Naive thymus-derived CD4-positive, alpha-beta T cell (primary cell): ENCODE measurements at regions of chr19 and their contacts with region 1.

Region 1: DNA sequence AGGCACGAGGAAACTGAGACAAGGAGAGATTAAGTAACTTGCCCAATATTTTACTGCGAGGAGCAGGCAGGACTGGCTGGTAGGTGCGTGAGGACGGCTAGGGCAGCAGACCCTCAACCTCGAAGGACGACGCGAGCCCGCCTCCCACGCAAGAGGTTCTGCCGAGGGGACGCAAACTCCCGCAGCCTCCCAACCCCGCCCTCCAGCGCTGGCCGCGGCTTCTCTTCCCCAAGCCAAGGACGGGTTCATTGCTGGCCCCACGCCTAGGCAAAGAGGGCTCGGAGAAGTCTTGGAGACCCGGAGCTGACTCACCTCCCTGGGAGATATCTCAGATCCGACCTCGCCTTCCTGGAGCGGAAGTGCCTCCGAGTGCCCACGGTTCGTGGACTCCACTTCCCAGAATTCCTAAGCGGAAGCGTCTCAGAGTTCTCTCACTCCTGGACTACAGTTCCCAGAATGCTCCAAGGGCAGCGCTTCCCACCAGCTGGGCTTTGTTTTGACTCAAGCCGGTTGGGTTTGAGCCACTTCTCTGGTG is at the start of gene ZNF235:
- DNase-seq: peak; percentile 17 to 77 (median 59)
- ATAC-seq: peak; percentile 97
- H3K4me3 ChIP-seq: peak within 1 kb of the TSS; percentile 84
- H3K4me3 Mint-ChIP-seq: peak within 1 kb of the TSS; percentile 88 to 96 (median 93)
- H3K27ac ChIP-seq: peak within 1 kb of the TSS; percentile 65
- H3K27ac Mint-ChIP-seq: peak within 1 kb of the TSS; percentile 20 to 82 (median 77)
- H3K4me1 ChIP-seq: peaks cover 10 to 12% of the 10 kb centered on the region in 2 donors
- H3K4me1 Mint-ChIP-seq: peaks cover 5 to 34% (median 27%) of the 10 kb centered on the region in 7 donors
- H3K27me3 ChIP-seq: no peaks in the 10 kb centered on the region
- H3K27me3 Mint-ChIP-seq: peaks cover 0 to 10% (median 0%) of the 10 kb centered on the region in 5 donors
- total RNA-seq, gene ZNF235: 5.5 to 14.3 (median 6.7) TPM

Region 2: DNA sequence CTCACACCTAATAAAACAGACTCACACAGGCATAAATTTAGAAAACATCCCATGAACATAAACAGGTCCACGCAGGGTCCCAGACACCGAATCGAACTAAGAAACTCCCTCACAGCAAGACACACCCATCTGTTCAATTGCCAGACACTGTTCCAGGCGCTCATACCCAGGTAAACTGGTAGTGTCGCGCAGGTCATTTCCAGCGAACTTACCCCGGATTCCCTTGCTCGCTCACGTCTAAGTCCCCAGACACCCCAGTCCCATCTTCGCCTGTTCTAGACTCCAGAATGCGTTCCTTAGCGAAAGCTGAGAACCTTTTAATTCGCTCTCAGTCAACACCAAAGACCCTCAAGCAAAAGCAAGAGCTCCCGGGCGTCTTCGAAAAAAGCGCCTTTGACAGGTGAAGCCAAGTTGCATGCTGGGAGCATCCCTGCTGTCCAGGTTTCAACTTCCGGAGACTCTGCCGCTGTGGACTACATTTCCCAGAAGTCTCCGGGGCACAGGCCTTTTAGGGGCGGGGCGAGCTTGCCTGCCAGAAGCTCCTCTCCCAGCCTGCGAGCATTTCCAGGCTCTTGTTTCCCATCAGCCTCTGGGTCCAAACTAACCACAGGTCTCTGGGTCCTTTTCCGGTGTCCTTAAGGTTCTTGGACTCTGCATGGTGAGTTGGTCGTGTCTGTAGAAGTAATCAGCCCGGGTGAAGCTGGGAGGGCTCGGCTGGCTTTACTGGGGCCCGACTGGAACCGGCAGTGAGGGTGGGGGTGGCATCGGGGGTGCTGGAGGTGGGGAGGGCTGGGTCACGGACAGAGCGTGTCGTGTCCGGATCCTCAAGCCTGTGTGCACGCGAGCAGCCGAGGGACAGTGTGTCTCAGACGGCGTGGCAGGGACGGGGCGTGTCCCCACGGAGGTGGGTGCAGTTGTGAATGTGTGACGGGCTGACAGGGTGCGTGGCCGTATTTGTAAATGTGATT is 477.7 kb before region 1 on chr19 and contains the start of gene ZNF283:
- CTCF ChIA-PET with region 1: no interaction called
- POLR2A ChIA-PET with region 1: no interaction called
- intact Hi-C with region 1: loop called in 1 of 2 experiments (anchors 2 kb)
- DNase-seq: peak; percentile 60 to 78 (median 74)
- ATAC-seq: peak; percentile 99
- H3K4me3 ChIP-seq: peak within 1 kb of the TSS; percentile 77
- H3K4me3 Mint-ChIP-seq: peak within 1 kb of the TSS; percentile 76 to 93 (median 90)
- H3K27ac ChIP-seq: peak within 1 kb of the TSS; percentile 66
- H3K27ac Mint-ChIP-seq: peak within 1 kb of the TSS; percentile 49 to 86 (median 77)
- H3K4me1 ChIP-seq: peaks cover 4 to 12% of the 10 kb centered on the region in 2 donors
- H3K4me1 Mint-ChIP-seq: peaks cover 16 to 25% (median 21%) of the 10 kb centered on the region in 7 donors
- H3K27me3 ChIP-seq: no peaks in the 10 kb centered on the region
- H3K27me3 Mint-ChIP-seq: peaks cover 1 to 16% (median 9%) of the 10 kb centered on the region in 5 donors
- total RNA-seq, gene ZNF283: 4.3 to 24.4 (median 7.7) TPM

Region 3: DNA sequence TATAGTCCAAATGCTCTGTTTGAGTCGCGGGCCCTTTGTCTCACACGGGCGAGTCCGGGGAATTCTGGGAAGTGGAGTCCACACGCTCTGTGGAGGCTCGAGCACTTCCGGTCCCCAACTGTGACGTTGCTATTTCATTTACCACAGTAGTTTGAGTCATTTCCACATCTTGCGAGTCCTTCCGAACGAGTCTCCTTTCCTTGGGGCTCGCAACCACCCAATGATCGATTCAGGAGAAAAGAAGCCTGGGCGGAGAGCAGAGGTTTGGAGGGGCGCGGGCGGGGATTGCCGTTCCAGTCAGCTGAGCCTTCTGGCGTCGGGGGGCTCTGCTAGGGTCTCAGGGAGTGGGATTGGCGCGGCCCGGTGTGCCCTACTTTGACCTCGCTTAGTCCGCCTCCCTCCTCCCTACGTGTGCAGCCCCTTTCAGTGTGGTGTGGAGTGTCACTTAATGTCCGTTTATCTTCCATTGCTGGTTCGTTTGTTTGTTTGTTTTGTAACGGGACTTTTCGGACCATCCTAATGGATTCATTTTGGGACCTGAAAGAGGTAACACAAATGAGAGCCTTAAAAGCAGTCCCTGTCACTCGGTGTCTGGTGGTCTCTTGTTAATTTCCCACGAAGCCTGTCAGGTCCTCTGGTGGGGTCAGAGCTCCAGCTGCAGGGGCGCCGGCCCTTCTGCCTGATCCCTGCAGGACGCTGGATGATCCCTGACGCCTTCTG is 279.3 kb before region 1 on chr19 and contains the start of gene ZNF222:
- CTCF ChIA-PET with region 1: no interaction called
- POLR2A ChIA-PET with region 1: no interaction called
- intact Hi-C with region 1: loop called in 1 of 2 experiments (anchors 1 kb)
- DNase-seq: peak; percentile 41 to 78 (median 66)
- ATAC-seq: peak; percentile 99
- H3K4me3 ChIP-seq: peak within 1 kb of the TSS; percentile 76
- H3K4me3 Mint-ChIP-seq: peak within 1 kb of the TSS; percentile 95 to 100 (median 98)
- H3K27ac ChIP-seq: peak within 1 kb of the TSS; percentile 71
- H3K27ac Mint-ChIP-seq: peak within 1 kb of the TSS; percentile 84 to 98 (median 94)
- H3K4me1 ChIP-seq: peaks cover 5 to 9% of the 10 kb centered on the region in 2 donors
- H3K4me1 Mint-ChIP-seq: peaks cover 12 to 40% (median 31%) of the 10 kb centered on the region in 7 donors
- H3K27me3 ChIP-seq: no peaks in the 10 kb centered on the region
- H3K27me3 Mint-ChIP-seq: peaks cover 0 to 9% (median 3%) of the 10 kb centered on the region in 5 donors
- total RNA-seq, gene ZNF222: 2.9 to 10.1 (median 4.5) TPM

Region 4: DNA sequence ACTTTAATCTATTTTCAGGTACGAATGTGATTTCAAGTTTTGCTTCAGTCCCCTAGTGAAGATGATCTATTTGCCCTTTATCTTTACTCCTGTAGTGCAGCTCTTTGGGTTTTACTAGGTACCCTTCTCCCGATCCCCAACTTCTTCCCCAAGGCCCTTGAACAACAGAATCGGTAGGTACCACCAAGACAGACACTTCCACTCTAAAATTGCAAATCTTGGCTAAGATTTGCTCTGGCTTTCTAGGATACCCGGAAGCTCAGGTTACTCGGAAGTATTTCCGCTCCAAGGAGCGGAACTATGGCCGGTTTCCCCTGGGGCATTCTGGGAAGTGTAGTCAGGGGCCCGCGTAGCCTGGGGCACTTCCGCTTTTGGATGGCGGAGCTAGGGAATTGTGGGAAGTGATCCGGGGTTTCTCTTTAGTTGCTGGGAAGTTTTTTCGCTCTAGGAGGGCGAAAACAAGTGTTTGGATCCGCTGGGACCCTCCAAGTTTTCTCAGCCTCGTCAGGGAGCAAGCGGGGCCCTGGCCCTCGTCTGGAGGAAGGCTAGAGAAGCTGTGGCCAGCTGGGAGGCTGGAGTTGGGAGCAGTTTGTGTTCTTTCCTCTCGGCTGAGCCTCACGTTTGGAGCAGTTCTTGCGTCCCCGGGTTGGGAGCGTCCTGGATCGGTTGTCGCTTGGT is 97.5 kb before region 1 on chr19:
- CTCF ChIA-PET with region 1: no interaction called
- POLR2A ChIA-PET with region 1: interaction called, 4 read pairs
- intact Hi-C with region 1: loop called (anchors 1 kb)
- DNase-seq: peak; percentile 25 to 78 (median 70)
- ATAC-seq: peak; percentile 97
- H3K4me3 ChIP-seq: peak overlapping the region; percentile 79
- H3K4me3 Mint-ChIP-seq: peak overlapping the region; percentile 81 to 95 (median 87)
- H3K27ac ChIP-seq: peak overlapping the region; percentile 75
- H3K27ac Mint-ChIP-seq: peak overlapping the region; percentile 79 to 93 (median 84)
- H3K4me1 ChIP-seq: peaks cover 0 to 11% of the 10 kb centered on the region in 2 donors
- H3K4me1 Mint-ChIP-seq: peaks cover 7 to 15% (median 11%) of the 10 kb centered on the region in 7 donors
- H3K27me3 ChIP-seq: no peaks in the 10 kb centered on the region
- H3K27me3 Mint-ChIP-seq: peaks cover 0 to 22% (median 16%) of the 10 kb centered on the region in 5 donors

Region 5: DNA sequence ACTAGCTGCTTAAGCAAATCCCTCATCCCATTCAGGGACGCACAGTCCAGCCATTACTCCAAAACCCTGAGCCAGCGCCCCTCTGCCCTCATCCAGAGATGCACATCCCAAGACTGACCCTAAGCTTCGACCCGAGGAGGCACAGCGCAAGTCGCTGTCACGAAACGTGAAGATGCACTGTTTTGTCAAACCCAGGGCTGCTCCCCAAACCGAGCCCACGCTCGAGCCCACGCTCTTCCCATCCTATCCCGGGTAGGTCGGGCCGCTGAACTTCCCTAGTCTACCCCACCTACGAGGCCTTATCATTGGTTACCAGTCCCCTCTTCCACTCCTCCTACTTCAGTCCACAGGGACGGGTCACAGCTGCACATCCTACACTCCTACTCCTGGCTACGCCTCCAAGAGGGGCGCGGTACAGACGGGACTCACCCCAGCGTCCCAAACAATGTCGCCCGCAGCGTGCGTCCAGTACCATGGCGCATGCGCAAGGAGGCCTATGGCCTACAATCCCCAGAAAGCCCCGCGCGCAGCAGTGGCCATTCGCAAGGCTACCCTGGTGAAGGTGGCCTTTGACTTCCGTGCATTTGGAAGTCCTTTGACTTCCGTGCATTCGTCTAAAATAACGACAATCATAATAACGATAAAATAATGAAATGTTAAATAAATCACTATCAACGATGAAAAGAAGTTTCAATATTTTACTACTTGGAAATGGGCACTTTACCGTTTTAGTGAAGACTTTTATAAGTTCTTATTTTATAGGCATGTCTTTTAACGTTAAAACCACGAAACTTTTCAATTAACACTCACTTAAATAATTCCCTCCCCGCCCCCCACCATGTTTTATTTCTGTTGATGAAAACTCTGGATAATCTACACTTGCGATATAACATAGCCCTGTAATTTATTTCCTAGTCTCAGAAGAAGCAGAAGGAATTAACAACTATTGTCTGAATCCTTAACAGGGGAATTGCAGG is 96.7 kb after region 1 on chr19 and contains the start of gene ZNF285:
- CTCF ChIA-PET with region 1: no interaction called
- POLR2A ChIA-PET with region 1: no interaction called
- intact Hi-C with region 1: loop called in 1 of 2 experiments (anchors 1 kb)
- DNase-seq: peak; percentile 48 to 79 (median 63)
- ATAC-seq: peak; percentile 92
- H3K4me3 ChIP-seq: peak within 1 kb of the TSS; percentile 57
- H3K4me3 Mint-ChIP-seq: peak within 1 kb of the TSS; percentile 90 to 100 (median 92)
- H3K27ac ChIP-seq: no peak within 1 kb of the TSS
- H3K27ac Mint-ChIP-seq: peak within 1 kb of the TSS; percentile 14 to 94 (median 68)
- H3K4me1 ChIP-seq: no peaks in the 10 kb centered on the region
- H3K4me1 Mint-ChIP-seq: peaks cover 4 to 14% (median 6%) of the 10 kb centered on the region in 7 donors
- H3K27me3 ChIP-seq: no peaks in the 10 kb centered on the region
- H3K27me3 Mint-ChIP-seq: peaks cover 0 to 20% (median 8%) of the 10 kb centered on the region in 5 donors
- total RNA-seq, gene ZNF285: 0.10 to 4.8 (median 0.90) TPM